ENCODE measurements at regions of chr12 and their contacts with region 1.

Region 1: DNA sequence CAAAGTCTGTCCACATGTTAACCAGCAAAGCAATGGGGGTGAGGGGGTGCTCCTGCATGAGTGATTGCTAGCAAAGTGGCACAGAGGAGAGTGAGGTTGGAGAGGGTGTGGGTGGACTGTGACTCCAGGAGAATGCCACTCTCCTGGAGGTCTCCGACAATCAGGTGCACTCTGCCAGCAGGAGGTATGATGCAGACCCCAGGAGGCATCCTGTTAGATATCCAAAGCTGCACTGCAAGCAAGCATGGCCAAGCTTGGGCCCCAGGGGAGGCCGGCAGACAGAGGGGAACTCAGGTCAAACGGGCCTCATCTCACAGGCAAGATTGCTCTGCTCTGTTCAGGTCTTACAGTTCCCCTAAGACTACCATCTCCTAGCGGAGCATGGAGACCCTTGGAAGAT is 73.5 kb upstream of the ALX1 start:
- DNase-seq: no peak

Region 2: DNA sequence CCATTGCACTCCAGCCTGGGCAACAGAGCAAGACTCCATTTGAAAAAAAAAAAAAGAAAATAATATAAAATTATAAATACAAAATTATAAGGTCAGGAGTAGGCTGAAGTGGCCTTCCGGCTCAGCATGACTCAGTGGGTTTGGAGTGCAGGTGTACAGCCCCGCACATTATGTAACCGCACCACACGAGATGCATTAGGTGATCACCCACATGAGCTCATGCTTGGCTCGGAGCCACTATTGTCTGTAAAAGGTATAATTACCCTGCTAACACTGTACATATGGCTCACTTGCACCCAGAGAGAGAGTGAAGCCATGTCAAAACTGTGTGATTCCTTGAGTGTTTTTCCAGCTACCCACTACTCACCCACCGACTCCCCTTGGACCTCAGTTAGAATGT is 851.0 kb before region 1 on chr12:
- intact Hi-C with region 1: loop called in 1 of 2 experiments (anchors 5 kb)
- DNase-seq: no peak